HEK293 (cell line): ENCODE measurements at regions of chr4 and their contacts with region 1.

Region 1: GRCh38 chr4:42277291-42277690 is 120.0 kb upstream of the SHISA3 start:
- H3K4me3 ChIP-seq: no peak overlapping the region
- H3K27ac ChIP-seq: no peak overlapping the region
- H3K4me1 ChIP-seq: no peaks in the 10 kb centered on the region
- CTCF ChIP-seq: no peak

Region 2: DNA sequence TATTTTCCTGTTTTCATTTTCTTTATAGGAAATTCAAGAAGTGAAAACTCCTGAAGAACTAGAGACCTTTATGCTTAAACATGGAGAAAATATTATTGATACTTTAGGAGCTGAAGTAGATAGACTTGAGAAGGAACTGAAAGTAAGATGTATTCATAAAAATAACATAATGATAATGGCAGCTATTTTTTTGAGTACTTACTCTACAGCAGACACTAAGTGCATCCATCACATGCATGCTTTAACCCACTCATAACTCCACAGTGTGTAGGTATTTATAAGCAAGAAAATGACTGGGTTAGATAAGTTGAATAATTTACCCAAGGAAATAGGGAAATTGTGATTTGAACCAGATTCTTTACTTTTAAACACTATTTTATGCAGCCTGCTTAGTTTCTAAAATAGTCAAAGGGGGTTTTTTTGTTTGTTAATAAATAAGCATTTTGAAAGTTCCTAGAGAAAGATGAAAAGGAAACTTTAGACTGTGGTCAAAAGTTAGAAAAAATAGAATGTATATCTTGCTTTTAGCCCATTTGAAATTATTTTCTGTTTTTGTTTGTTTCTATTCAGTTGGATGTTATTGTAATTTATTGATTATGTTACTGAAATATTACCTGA is 199.0 kb before region 1 on chr4:
- CTCF ChIA-PET with region 1: interaction called, 10 read pairs
- POLR2A ChIA-PET with region 1: no interaction called
- H3K4me3 ChIP-seq: no peak overlapping the region
- H3K27ac ChIP-seq: no peak overlapping the region
- H3K4me1 ChIP-seq: no peaks in the 10 kb centered on the region
- CTCF ChIP-seq: no peak

Region 3: DNA sequence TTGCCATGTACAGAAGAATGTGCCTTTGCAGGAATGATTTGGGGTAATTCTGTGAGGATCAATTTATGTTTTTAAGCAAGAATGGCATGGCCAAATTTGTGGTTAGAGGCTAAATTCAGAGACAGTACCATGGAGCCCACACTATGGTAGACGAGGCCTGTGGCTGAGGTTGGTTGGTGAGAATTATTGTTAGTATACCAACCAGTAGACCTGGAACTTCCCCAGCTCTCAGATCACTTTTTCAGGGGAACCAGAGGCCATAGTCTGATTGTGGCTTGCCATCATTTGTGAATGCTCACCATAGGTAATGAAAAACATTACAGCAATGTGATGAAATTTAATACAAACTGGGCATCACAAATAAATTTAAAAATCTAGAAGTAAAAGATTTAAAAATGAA is 176.3 kb after region 1 on chr4:
- CTCF ChIA-PET with region 1: no interaction called
- POLR2A ChIA-PET with region 1: no interaction called
- H3K4me3 ChIP-seq: no peak overlapping the region
- H3K27ac ChIP-seq: no peak overlapping the region
- H3K4me1 ChIP-seq: peaks cover 5% of the 10 kb centered on the region; the same call in 1 of the 2 replicates
- CTCF ChIP-seq: no peak

Region 4: DNA sequence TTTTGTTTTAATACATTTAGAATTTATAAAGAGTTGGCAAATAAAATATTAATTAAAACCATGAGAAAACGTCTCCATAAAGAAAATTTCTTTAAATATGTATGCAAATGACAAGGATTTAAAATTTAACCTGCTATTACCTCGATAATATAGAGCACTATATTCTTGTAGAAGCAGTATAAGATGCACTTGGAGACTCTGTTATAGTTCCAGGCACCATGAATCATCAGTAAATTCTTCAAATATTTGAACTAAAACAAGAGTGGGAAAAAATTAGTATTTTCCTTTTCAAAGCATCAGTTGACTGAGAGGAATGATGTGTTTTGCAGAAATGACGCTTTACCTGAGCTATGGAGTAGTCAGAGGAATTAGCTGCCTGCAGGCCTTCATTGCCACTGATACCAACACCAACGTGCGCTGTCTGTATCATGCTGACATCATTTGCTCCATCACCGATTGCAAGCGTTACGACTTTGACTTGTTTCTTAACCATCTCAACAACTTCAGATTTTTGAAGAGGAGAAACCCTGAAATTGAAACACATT is 187.3 kb after region 1 on chr4:
- CTCF ChIA-PET with region 1: no interaction called
- POLR2A ChIA-PET with region 1: no interaction called
- H3K4me3 ChIP-seq: no peak overlapping the region
- H3K27ac ChIP-seq: no peak overlapping the region
- H3K4me1 ChIP-seq: no peaks in the 10 kb centered on the region
- CTCF ChIP-seq: no peak